Naive thymus-derived CD4-positive, alpha-beta T cell (primary cell): ENCODE measurements at regions of chr10 and their contacts with region 1.

Region 1: DNA sequence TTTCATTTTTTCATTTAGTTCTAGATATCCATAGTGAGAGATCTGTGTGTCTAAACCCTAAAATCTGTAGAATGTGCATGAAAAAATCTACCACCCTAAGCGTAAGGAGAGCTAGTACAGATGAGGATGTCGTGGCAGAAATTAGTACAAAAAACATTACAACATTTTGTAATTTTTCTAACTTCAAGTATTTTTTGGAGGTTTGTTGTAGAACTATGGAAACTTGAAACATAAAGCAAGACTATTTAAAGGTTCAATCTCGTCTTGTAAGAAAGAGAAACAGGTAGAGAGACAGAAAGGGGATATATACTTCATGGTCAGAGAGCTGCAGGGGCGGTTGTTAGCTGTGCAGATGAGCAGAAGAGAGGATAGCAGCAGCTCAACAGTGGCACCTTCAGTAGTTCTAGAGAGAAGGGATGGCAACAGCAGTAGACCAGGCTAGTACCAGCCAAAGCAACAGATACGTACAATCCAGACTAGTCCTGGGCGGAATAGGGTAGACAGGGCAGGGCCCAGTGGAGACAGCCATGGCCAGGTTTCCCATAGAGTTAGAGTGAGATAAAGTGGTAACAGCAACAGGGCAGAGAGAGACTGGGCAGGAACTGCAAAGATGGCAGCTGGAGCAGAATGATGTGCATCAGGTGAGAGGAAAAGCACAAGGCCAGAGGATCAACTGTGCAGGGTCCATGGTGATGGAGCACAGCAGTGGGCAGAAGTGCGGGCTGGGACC is 145.2 kb downstream of the FRMD4A start:
- DNase-seq: peak in 4 of 9 donors; percentile 30 to 75 (median 74)
- ATAC-seq: peak; percentile 87
- H3K4me3 ChIP-seq: peak overlapping the region; percentile 37
- H3K4me3 Mint-ChIP-seq: peak overlapping the region; percentile 18 to 88 (median 77)
- H3K27ac ChIP-seq: peak overlapping the region; percentile 61
- H3K27ac Mint-ChIP-seq: peak overlapping the region; percentile 88 to 98 (median 95)
- H3K4me1 ChIP-seq: peaks cover 0 to 12% of the 10 kb centered on the region in 2 donors
- H3K4me1 Mint-ChIP-seq: peaks cover 12 to 35% (median 22%) of the 10 kb centered on the region in 7 donors
- H3K27me3 ChIP-seq: peaks cover 0 to 5% of the 10 kb centered on the region in 2 donors
- H3K27me3 Mint-ChIP-seq: peaks cover 17 to 69% (median 21%) of the 10 kb centered on the region in 5 donors

Region 2: DNA sequence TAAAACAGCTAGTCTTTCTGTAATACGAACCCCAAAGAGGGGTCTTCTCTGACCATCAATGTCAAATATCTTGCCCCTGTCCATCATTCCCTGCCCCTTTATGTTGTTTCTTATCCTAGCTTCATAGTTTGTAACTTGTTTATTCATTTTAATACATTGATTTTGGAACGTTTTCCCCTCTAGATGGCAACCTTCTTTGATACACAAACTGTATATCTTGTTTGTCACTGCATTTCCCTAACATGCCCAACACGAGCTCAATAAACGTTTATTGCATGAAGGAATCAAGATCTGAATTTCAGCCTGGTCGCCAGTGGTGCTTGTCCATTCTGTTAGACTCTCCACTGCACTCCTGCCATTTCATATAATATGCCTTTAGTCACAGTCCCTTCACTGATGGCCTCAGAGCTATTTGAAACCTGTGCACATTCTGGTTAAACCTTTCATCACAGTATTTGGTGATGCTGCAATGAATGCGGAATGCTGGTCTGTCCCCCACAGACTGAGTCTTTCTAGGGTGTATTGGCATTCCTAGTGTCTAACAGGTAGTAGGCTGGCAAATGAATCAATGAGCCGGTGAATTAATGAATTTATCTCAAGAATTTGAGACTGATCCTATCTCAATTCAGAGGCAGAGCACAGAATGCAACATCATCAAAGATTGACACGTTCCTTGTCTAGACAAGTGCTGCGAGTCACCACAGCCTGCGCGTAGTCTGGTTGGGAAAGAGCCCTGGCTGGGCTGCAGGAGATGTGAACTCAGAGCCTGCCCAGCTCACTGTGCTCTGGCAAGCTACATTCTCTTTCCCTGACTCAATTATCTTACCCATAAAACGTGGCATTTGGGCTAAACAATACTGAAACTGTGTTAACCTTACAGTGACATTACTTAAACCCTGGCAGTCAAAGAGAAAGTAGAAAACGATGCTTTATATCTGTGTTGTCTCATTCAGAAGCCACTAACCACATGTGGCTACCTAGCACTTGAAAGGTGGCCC is 200.4 kb after region 1 on chr10:
- CTCF ChIA-PET with region 1: no interaction called
- POLR2A ChIA-PET with region 1: no interaction called
- intact Hi-C with region 1: loop called in 1 of 2 experiments (anchors 10 kb)
- DNase-seq: no peak
- ATAC-seq: no peak
- H3K4me3 ChIP-seq: no peak overlapping the region
- H3K4me3 Mint-ChIP-seq: peak overlapping the region in 2 of 10 donors; percentile 7 to 28
- H3K27ac ChIP-seq: no peak overlapping the region
- H3K27ac Mint-ChIP-seq: peak overlapping the region in 3 of 9 donors; percentile 7 to 36 (median 23)
- H3K4me1 ChIP-seq: peaks cover 0 to 50% of the 10 kb centered on the region in 2 donors
- H3K4me1 Mint-ChIP-seq: peaks cover 24 to 75% (median 63%) of the 10 kb centered on the region in 7 donors
- H3K27me3 ChIP-seq: peaks cover 0 to 3% of the 10 kb centered on the region in 2 donors
- H3K27me3 Mint-ChIP-seq: peaks cover 0 to 50% (median 0%) of the 10 kb centered on the region in 5 donors